ENCODE measurements at regions of chr18 and their contacts with region 1.

Region 1: GRCh38 chr18:49178736-49179135 is 228.0 kb upstream of the SMAD7 start:
- DNase-seq: peak; percentile 58

Region 2: GRCh38 chr18:48834413-48835031 is 344.2 kb before region 1 on chr18:
- in situ Hi-C with region 1: no loop called
- DNase-seq: peak; percentile 92

Region 3: GRCh38 chr18:48928787-48929186 is 249.9 kb before region 1 on chr18:
- in situ Hi-C with region 1: loop called (anchors 25 kb)
- DNase-seq: no peak

Region 4: GRCh38 chr18:49359732-49360444 is 181.2 kb after region 1 on chr18:
- in situ Hi-C with region 1: no loop called
- DNase-seq: peak; percentile 18

Measured in ACHN (cell line).